Dorsolateral prefrontal cortex (tissue), 120 donors: ENCODE measurements at regions of chr19 and their contacts with region 1.

Region 1: GRCh38 chr19:19865739-19866481 is at the start of gene ZNF253:
- DNase-seq: peak; percentile 96 to 99 (median 98)
- H3K4me3 ChIP-seq: peak within 1 kb of the TSS; percentile 56 to 97 (median 85)
- H3K27ac ChIP-seq: peak within 1 kb of the TSS; percentile 75 to 99 (median 95)
- H3K27me3 ChIP-seq: no peaks in the 10 kb centered on the region
- CTCF ChIP-seq: peak in 6 of 56 donors; percentile 8 to 22 (median 14)
- total RNA-seq, gene ZNF253: 14.3 to 34.6 (median 21.3) TPM

Region 2: GRCh38 chr19:18941419-18942354 is 924.2 kb before region 1 on chr19:
- intact Hi-C with region 1: no loop called
- DNase-seq: no peak
- H3K4me3 ChIP-seq: peak overlapping the region in 27 of 59 donors; percentile 9 to 82 (median 32)
- H3K27ac ChIP-seq: peak overlapping the region in 29 of 59 donors; percentile 2 to 77 (median 46)
- H3K27me3 ChIP-seq: no peaks in the 10 kb centered on the region
- CTCF ChIP-seq: peak in 5 of 56 donors; percentile 2 to 18 (median 8)

Region 3: GRCh38 chr19:19515764-19516519 is 350.0 kb before region 1 on chr19 and contains the start of gene NDUFA13:
- intact Hi-C with region 1: no loop called
- DNase-seq: peak; percentile 87 to 95 (median 93)
- H3K4me3 ChIP-seq: peak within 1 kb of the TSS; percentile 55 to 99 (median 86)
- H3K27ac ChIP-seq: peak within 1 kb of the TSS; percentile 18 to 94 (median 87)
- H3K27me3 ChIP-seq: no peaks in the 10 kb centered on the region
- CTCF ChIP-seq: peak in 27 of 56 donors; percentile 4 to 51 (median 24)
- total RNA-seq, gene NDUFA13: 270 to 471 (median 352) TPM

Region 4: GRCh38 chr19:19663256-19664038 is 202.5 kb before region 1 on chr19 and contains the start of gene ATP13A1:
- intact Hi-C with region 1: loop called in 1 of 2 experiments (anchors 5 kb)
- DNase-seq: peak; percentile 93 to 98 (median 97)
- H3K4me3 ChIP-seq: peak within 1 kb of the TSS; percentile 76 to 100 (median 97)
- H3K27ac ChIP-seq: peak within 1 kb of the TSS; percentile 81 to 100 (median 97)
- H3K27me3 ChIP-seq: no peaks in the 10 kb centered on the region
- CTCF ChIP-seq: peak in 38 of 56 donors; percentile 3 to 61 (median 32)
- total RNA-seq, gene ATP13A1: 45.7 to 107 (median 68.6) TPM

Region 5: GRCh38 chr19:19900729-19901444 is 35.0 kb after region 1 on chr19 and contains the start of gene ZNF93:
- intact Hi-C with region 1: loop called in 1 of 2 experiments (anchors 2 kb)
- DNase-seq: peak; percentile 79 to 96 (median 93)
- H3K4me3 ChIP-seq: peak within 1 kb of the TSS; percentile 54 to 91 (median 74)
- H3K27ac ChIP-seq: peak within 1 kb of the TSS in 24 of 59 donors; percentile 19 to 79 (median 52)
- H3K27me3 ChIP-seq: no peaks in the 10 kb centered on the region
- CTCF ChIP-seq: peak in 4 of 56 donors; percentile 9 to 32 (median 16)
- total RNA-seq, gene ZNF93: 1.4 to 8.7 (median 3.6) TPM